GM12878 (cell line): ENCODE measurements at regions of chrX and their contacts with region 1.

Region 1: DNA sequence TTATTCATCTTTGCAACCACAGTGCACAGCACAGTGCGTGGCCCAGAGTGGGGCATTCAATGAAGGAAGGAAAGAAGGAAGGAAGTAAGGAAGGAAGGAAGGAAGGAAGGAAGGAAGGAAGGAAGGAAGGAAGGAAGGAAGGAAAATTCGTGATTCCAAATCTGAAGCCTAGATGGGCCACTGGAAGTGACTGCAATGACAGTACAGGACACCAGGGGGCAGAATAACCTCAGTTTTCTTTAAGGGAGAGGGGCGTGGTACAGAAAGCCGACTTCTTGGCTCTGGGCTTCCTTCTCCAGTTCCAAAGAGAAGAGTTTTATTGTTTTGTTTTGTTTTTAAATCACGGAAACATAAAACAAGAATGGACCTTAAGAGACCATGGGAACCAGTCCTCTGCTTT is 47.8 kb downstream of the APLN start:
- DNase-seq: peak; percentile 13
- ATAC-seq: peak; percentile 67
- H3K4me3 ChIP-seq: no peak overlapping the region
- H3K27ac ChIP-seq: no peak overlapping the region
- H3K4me1 ChIP-seq: peaks cover 5% of the 10 kb centered on the region
- H3K27me3 ChIP-seq: no peaks in the 10 kb centered on the region; a peak in 2 of 4 replicates
- CTCF ChIP-seq: peak; percentile 74 to 80 (median 76)
- EP300 ChIP-seq: no peak
- POLR2A ChIP-seq: no peak
- RAD21 ChIP-seq: peak; percentile 82

Region 2: GRCh38 chrX:129726307-129727111 is 119.6 kb after region 1 on chrX:
- CTCF ChIA-PET with region 1: interaction called, 25 read pairs
- POLR2A ChIA-PET with region 1: interaction called, 3 read pairs
- RAD21 ChIA-PET with region 1: interaction called, 6 read pairs
- SMC1A ChIA-PET with region 1: interaction called, 12 read pairs
- in situ Hi-C with region 1: no loop called
- intact Hi-C with region 1: loop called (anchors 2 kb)
- DNase-seq: no peak
- ATAC-seq: peak; percentile 83
- H3K4me3 ChIP-seq: no peak overlapping the region
- H3K27ac ChIP-seq: no peak overlapping the region
- H3K4me1 ChIP-seq: no peaks in the 10 kb centered on the region
- H3K27me3 ChIP-seq: no peaks in the 10 kb centered on the region
- CTCF ChIP-seq: peak; percentile 54 to 74 (median 67)
- EP300 ChIP-seq: no peak
- POLR2A ChIP-seq: no peak
- RAD21 ChIP-seq: peak; percentile 68

Region 3: DNA sequence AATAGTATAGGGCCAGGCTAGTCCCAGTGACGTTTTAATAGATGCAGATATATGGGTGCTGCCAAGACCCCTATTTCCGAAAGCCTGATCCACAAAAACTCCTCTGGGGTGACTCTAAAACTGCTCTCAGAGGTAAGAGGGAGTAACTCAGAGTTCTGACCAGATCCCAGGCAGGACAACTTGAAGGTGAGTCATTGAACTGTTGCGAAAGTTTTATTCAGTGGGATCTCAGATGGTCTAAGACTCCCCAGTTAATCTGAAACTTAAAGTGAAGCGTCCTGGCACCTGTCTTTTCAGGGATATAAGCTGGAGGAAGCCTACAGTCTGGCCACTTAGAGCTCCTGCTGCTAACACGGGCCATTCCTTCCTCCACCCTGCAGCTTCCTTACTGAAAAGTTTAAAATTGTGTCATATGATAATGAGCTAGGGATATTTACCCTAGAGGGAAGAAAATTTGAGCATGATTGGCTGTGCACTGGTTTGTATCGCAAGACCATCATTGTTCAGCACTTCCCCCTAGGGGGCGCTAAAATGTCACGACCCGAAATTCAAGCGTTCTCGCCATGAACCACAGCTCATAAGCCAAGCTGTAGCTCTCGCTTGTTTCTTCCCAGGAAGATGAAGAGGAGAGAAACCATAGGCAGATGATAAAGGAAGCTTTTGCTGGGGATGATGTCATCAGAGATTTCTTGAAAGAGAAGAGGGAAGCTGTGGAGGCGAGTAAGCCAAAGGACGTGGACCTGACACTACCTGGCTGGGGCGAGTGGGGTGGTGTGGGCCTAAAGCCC is 318.6 kb after region 1 on chrX:
- CTCF ChIA-PET with region 1: interaction called, 15 read pairs
- POLR2A ChIA-PET with region 1: no interaction called
- RAD21 ChIA-PET with region 1: interaction called, 4 read pairs
- SMC1A ChIA-PET with region 1: no interaction called
- in situ Hi-C with region 1: no loop called
- intact Hi-C with region 1: no loop called
- DNase-seq: no peak
- ATAC-seq: peak; percentile 93
- H3K4me3 ChIP-seq: no peak overlapping the region
- H3K27ac ChIP-seq: no peak overlapping the region
- H3K4me1 ChIP-seq: no peaks in the 10 kb centered on the region
- H3K27me3 ChIP-seq: no peaks in the 10 kb centered on the region
- CTCF ChIP-seq: peak; percentile 57 to 73 (median 73); a peak in 5 of 6 replicates
- EP300 ChIP-seq: no peak
- POLR2A ChIP-seq: no peak
- RAD21 ChIP-seq: peak; percentile 70

Region 4: DNA sequence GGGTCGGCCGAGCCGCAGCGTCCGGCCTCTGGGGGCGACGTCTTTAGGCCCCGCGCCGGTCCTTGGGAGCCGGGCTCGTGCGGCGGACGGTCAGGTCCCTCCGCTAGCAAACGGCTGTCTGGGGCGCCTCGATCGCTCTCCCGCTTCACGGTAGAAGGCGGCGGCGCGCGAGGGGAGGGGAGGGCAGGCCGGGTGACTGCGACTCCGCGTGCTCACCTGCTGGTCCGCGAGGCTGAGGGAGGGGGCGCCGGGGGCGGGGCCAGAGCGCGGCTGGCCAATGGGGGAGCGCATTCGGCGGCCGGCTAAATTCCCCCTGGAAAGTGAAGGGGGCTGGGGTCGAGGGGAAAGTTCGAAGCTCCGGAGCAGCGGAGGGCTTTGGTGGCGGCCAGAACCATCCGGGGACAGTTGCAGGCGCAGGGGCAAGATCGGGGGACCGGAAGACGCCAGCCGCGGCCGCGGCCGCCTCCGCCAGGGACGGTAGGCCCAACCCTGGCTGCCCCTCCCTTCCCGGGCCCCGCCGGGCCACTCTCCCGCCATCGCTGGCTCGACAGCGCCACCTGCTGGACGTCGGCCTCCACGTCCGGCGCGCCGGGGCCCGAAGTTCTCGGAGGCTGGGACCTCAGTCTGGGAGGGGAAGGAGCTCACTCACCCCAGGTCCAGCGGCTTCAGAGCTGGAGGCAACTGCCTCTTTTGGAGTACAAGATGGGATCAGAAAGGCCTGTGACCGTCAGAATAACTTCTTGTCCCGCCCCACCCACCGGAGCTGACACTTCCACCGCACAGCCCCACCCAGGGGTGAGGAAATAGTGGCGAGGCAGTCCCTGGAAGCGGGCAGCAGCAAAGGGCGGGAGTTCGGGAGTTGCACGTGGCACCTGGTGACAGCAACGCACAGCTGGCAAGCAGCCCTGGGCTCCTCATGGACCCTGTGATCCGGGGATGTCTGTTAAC is 453.5 kb after region 1 on chrX:
- CTCF ChIA-PET with region 1: interaction called, 15 read pairs
- POLR2A ChIA-PET with region 1: no interaction called
- RAD21 ChIA-PET with region 1: interaction called, 15 read pairs
- SMC1A ChIA-PET with region 1: no interaction called
- in situ Hi-C with region 1: loop called (anchors 25 kb)
- intact Hi-C with region 1: loop called (anchors 1 kb)
- DNase-seq: no peak
- ATAC-seq: peak; percentile 98
- H3K4me3 ChIP-seq: peak overlapping the region; percentile 36; the same call in 1 of the 2 replicates
- H3K27ac ChIP-seq: no peak overlapping the region
- H3K4me1 ChIP-seq: peaks cover 3% of the 10 kb centered on the region; the same call in 1 of the 2 replicates
- H3K27me3 ChIP-seq: no peaks in the 10 kb centered on the region
- CTCF ChIP-seq: peak; percentile 66 to 90 (median 76)
- EP300 ChIP-seq: no peak
- POLR2A ChIP-seq: peak; percentile 66
- RAD21 ChIP-seq: peak; percentile 79

Region 5: GRCh38 chrX:130196466-130196865 is 589.5 kb after region 1 on chrX:
- CTCF ChIA-PET with region 1: interaction called, 3 read pairs
- POLR2A ChIA-PET with region 1: no interaction called
- RAD21 ChIA-PET with region 1: no interaction called
- SMC1A ChIA-PET with region 1: no interaction called
- in situ Hi-C with region 1: loop called (anchors 25 kb)
- intact Hi-C with region 1: loop called (anchors 2 kb)
- DNase-seq: no peak
- ATAC-seq: no peak
- H3K4me3 ChIP-seq: no peak overlapping the region
- H3K27ac ChIP-seq: no peak overlapping the region
- H3K4me1 ChIP-seq: peaks cover 4% of the 10 kb centered on the region; the same call in 1 of the 2 replicates
- H3K27me3 ChIP-seq: no peaks in the 10 kb centered on the region
- CTCF ChIP-seq: no peak
- EP300 ChIP-seq: no peak
- POLR2A ChIP-seq: no peak
- RAD21 ChIP-seq: no peak